ENCODE measurements at regions of chr6 and their contacts with region 1.

Region 1: GRCh38 chr6:36360241-36361054 is 23.8 kb upstream of the BNIP5 start:
- DNase-seq: peak; percentile 65 to 86
- ATAC-seq: peak; percentile 95

Region 2: DNA sequence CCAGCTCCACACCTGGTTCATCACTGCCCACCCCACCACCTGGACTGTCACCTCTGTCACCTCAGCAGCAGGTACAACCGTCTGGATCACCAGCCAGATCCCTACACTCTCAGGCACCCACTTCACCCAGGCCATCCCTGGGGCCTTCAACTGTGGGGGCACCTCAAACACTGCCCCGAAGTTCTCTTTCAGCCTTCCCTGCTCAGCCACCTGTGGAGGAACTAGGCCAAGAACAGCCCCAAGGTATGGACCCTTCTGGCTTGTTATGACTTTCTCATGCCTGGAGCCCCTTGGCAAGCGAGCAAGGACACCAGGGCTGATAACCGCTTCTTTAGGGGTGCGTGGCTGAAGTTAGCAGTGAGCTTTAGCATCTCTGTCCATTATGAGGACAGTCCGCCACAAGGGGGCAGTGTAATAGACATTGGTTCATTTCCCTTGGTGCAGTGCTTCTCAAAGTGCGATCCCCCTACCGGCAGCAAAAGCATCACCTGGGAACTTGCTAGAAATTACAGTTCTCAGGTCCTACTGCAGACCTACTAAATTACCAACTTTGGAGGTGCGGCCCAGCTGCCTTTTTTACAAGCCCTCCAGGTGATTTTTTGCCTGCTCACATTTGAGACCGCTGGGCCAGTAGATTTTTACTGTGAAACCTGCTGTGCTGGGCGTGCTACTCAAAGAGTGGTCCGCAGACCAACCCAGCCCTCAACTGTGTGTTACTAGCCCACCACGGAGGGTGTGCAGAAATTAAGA is 58.0 kb before region 1 on chr6:
- intact Hi-C with region 1: loop called (anchors 5 kb)
- DNase-seq: peak; percentile 86 to 98
- ATAC-seq: peak; percentile 95

Measured in left colon (tissue), 2 donors.